CD8-positive, alpha-beta T cell (primary cell): ENCODE measurements at regions of chr17 and their contacts with region 1.

Region 1: GRCh38 chr17:64411999-64412771 is 21.5 kb upstream of the PECAM1 start:
- DNase-seq: peak in 1 of 9 experiments; percentile 40
- ATAC-seq: peak; percentile 17
- H3K4me3 ChIP-seq: peak overlapping the region in 1 of 2 experiments; percentile 6
- H3K4me3 Mint-ChIP-seq: peak overlapping the region; percentile 76
- H3K27ac ChIP-seq: no peak overlapping the region
- H3K27ac Mint-ChIP-seq: peak overlapping the region; percentile 82
- H3K4me1 ChIP-seq: peaks cover 9% of the 10 kb centered on the region
- H3K4me1 Mint-ChIP-seq: peaks cover 24% of the 10 kb centered on the region
- H3K27me3 ChIP-seq: no peaks in the 10 kb centered on the region
- H3K27me3 Mint-ChIP-seq: no peaks in the 10 kb centered on the region
- CTCF ChIP-seq: no peak

Region 2: DNA sequence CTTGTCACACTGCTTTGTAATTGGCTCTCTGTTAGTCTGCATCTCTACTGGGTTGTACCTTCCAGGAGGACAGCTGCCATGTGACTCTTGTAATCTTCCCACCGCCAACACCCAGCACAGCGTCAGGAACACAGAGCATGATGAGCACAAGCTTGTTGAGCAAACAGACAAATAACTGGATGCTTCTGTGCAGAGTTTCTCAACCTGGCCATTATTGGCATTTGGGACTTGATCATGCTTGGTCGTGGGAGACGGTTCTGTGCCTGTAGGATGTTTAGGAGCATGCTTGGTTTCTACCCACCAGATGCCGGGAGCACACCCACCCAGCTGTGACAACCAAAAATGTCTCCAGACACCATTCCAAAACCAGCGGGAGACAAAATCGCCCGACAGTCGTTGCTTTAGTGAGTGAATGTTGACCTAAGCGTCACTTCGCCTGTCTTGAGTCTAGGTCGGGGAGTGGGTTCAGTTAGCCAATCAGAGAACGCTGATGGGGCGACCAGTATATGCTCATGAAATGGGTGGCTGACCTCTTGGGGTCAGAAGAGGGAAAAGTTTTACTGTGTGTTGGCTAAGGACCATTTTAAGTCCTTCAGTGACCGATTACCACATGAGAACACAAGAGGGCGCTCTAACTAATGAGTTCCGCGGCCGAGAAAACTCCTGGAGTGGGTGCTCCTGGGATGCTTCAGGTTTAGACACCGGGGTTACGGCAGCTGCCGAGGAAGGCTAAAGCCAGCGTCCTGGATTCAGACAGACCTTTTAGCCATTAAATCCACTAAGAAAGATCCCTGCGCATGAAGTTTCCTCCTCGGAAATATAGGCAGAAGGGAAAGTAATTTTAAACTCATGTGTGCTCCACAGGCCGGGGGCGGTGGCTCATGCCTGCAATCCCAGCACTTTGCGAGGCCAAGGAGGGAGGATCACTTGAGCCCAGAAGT is 91.3 kb before region 1 on chr17:
- CTCF ChIA-PET with region 1: interaction called, 271 read pairs
- POLR2A ChIA-PET with region 1: no interaction called
- intact Hi-C with region 1: no loop called
- DNase-seq: peak in 8 of 9 experiments; percentile 38 to 76 (median 59)
- ATAC-seq: peak; percentile 68
- H3K4me3 ChIP-seq: no peak overlapping the region
- H3K4me3 Mint-ChIP-seq: peak overlapping the region; percentile 39
- H3K27ac ChIP-seq: peak overlapping the region in 1 of 2 experiments; percentile 33
- H3K27ac Mint-ChIP-seq: peak overlapping the region; percentile 88
- H3K4me1 ChIP-seq: no peaks in the 10 kb centered on the region
- H3K4me1 Mint-ChIP-seq: peaks cover 38% of the 10 kb centered on the region
- H3K27me3 ChIP-seq: no peaks in the 10 kb centered on the region
- H3K27me3 Mint-ChIP-seq: no peaks in the 10 kb centered on the region
- CTCF ChIP-seq: peak; percentile 84

Region 3: DNA sequence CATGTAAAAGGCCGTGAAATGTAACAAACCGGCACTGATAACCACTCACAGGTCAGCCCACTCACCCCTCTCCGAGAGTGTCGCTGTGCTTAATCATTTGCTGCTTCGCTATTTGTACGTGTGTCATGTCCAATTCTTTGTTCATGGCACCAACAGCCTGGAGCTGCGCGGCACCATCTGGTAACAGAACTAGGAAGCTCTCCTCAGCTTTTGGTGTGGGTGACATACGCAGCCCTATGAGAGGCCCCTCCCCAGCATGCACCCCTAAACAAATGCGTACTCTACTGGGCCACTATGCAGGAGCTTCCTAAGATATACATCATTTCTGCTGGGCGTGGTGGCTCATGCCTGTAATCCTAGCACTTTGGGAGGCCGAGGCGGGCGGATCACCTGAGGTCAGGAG is 19.2 kb before region 1 on chr17:
- CTCF ChIA-PET with region 1: interaction called, 119 read pairs
- POLR2A ChIA-PET with region 1: interaction called, 9 read pairs
- intact Hi-C with region 1: loop called in 1 of 2 experiments (anchors 2 kb)
- DNase-seq: peak in 7 of 9 experiments; percentile 28 to 77 (median 63)
- ATAC-seq: peak; percentile 76
- H3K4me3 ChIP-seq: peak overlapping the region; percentile 52 to 56
- H3K4me3 Mint-ChIP-seq: peak overlapping the region; percentile 87
- H3K27ac ChIP-seq: peak overlapping the region; percentile 60 to 78
- H3K27ac Mint-ChIP-seq: peak overlapping the region; percentile 96
- H3K4me1 ChIP-seq: peaks cover 79% of the 10 kb centered on the region
- H3K4me1 Mint-ChIP-seq: peaks cover 61% of the 10 kb centered on the region
- H3K27me3 ChIP-seq: no peaks in the 10 kb centered on the region
- H3K27me3 Mint-ChIP-seq: no peaks in the 10 kb centered on the region
- CTCF ChIP-seq: no peak